RWPE1 (cell line): ENCODE measurements at regions of chr12 and their contacts with region 1.

Region 1: GRCh38 chr12:57223191-57224165 is 6.0 kb upstream of the SHMT2 start:
- DNase-seq: no peak
- H3K27ac ChIP-seq: no peak overlapping the region
- CTCF ChIP-seq: no peak

Region 2: GRCh38 chr12:57166971-57167371 is 56.5 kb before region 1 on chr12:
- CTCF ChIA-PET with region 1: no interaction called
- POLR2A ChIA-PET with region 1: no interaction called
- DNase-seq: peak; percentile 94
- H3K27ac ChIP-seq: peak overlapping the region; percentile 90
- CTCF ChIP-seq: no peak

Region 3: DNA sequence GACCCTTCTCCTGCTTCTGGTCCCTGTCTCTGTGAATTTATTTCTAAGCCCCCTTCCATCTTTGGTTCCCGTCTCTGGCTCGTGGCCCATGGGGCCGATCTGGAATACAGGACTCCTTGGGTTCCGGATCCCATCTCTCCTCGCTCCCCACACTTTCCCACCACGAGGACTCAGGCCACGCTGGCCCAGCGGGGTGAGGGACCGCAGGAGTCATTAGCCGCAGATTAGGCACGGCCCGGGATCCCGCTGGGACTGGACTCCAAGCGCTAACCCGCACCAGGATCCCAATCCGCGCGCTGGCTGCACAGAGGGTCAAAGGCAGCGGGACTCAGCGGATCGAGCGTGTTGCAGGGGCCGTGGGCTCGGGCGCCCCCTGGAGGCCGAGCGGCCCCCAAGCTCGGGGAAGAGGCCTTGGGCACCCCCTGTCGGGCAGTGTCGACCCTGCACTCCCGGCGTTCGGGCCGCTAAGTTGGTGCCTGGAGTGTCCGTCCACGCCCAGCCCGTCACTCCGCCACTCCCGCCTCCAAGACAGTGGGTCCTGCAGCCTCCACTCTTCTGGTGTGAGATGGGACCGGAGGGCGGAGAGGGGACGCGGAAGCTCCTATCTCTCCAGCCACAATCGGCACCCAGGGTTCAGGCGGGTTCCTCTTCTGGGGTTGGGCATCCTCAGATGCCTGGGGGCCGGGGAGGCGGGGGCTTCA is 15.5 kb after region 1 on chr12:
- CTCF ChIA-PET with region 1: interaction called, 147 read pairs
- POLR2A ChIA-PET with region 1: interaction called, 3 read pairs
- DNase-seq: peak; percentile 88
- H3K27ac ChIP-seq: peak overlapping the region; percentile 71
- CTCF ChIP-seq: peak; percentile 100

Region 4: GRCh38 chr12:57309420-57309819 is 85.9 kb after region 1 on chr12:
- CTCF ChIA-PET with region 1: no interaction called
- POLR2A ChIA-PET with region 1: no interaction called
- DNase-seq: peak; percentile 34
- H3K27ac ChIP-seq: no peak overlapping the region
- CTCF ChIP-seq: no peak